Activated CD8-positive, alpha-beta memory T cell treated with anti-CD3 and anti-CD28 coated beads, Interleukin-2, amount 10 ng/mL, durations not matched to agents 7 days and 5 days (primary cell): ENCODE measurements at regions of chr1 and their contacts with region 1.

Region 1: DNA sequence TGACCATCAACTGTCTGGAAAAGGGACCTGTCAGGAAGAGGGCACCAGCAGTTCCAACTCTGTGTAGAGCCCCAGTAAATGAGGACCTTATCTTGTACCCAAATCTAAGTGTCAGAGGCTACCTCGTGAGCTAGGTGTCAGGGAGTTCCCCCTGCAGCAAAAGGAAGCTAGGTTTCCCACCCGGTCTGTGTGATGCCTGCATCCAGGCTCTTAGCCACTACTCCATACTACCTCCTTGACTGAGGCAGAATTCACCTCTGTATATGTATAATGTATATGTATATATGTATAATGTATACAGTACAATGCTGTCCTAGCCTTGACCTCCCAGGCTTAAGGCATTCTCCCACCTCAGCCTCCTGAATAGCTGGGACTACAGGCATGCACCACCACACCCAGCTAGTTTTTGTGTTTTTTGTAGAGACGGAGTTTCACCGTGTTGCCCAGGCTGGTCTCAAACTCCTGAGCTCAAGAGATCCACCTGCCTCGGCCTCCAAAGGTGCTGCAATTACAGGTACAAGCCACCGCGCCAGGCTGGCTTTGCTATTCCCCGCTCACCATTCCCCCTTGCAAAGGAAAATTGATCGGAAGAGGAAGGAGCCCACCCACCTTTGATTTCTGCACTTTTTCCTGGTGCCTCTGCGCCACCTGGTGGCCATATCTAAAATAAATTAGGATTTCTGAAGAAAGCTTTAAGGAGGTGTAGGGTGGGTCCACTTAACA is 15.7 kb upstream of the LUZP1 start:
- DNase-seq: no peak
- ATAC-seq: peak; percentile 36
- H3K4me3 Mint-ChIP-seq: peak overlapping the region; percentile 33
- H3K27ac Mint-ChIP-seq: no peak overlapping the region
- H3K4me1 Mint-ChIP-seq: peaks cover 7% of the 10 kb centered on the region
- H3K27me3 Mint-ChIP-seq: peaks cover 13% of the 10 kb centered on the region

Region 2: GRCh38 chr1:23057301-23057700 is 127.1 kb before region 1 on chr1:
- CTCF ChIA-PET with region 1: interaction called, 13 read pairs
- DNase-seq: no peak
- ATAC-seq: no peak
- H3K4me3 Mint-ChIP-seq: no peak overlapping the region
- H3K27ac Mint-ChIP-seq: no peak overlapping the region
- H3K4me1 Mint-ChIP-seq: no peaks in the 10 kb centered on the region
- H3K27me3 Mint-ChIP-seq: no peaks in the 10 kb centered on the region

Region 3: DNA sequence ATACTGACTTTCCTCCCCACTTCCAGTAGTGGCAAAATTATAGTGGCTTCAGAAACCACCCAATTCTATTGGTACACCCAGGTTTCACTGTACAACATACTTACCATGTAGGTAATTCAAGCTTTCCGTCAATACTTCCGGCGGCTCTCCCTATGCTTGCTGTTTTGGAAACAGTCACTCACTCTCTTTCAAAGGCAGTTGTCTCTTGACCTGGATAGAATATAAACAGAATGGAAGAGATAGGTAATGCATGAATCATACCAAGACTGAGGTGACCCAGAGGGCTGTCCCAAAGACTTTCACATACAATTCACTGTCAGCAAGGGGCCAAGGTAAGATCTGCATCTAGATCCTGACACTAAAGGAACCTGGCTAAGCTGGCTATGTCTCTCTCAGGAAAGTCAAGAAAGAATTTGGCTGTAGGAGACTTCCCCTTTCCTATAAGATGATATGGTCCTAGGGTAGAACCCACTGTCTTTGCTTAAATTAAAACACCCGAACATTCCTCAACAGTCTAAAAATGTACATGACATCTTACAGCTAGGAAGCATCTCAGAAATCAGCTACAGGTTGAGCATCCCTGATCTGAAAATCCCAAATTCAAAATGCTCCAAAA is 75.3 kb before region 1 on chr1:
- CTCF ChIA-PET with region 1: interaction called, 515 read pairs
- DNase-seq: no peak
- ATAC-seq: no peak
- H3K4me3 Mint-ChIP-seq: no peak overlapping the region
- H3K27ac Mint-ChIP-seq: no peak overlapping the region
- H3K4me1 Mint-ChIP-seq: peaks cover 51% of the 10 kb centered on the region
- H3K27me3 Mint-ChIP-seq: no peaks in the 10 kb centered on the region

Region 4: DNA sequence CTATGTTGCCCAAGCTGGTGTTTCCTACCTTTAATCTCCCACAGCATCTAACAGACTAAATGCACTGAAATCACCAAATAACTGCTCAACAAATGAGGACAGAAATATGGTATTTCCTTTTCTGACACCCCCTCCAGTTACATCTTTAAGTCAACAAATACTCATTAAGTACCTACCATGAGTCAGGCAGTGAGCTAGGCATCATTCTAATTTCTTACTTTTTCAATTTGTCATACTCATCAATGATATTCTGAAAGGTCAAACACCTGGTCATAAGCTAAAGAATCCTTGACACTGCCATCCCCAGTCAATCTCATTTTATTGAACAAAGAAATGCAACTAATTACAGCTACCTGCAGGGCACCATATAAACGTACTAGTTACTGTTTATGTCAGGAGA is 52.3 kb before region 1 on chr1:
- CTCF ChIA-PET with region 1: interaction called, 23 read pairs
- DNase-seq: no peak
- ATAC-seq: no peak
- H3K4me3 Mint-ChIP-seq: no peak overlapping the region
- H3K27ac Mint-ChIP-seq: no peak overlapping the region
- H3K4me1 Mint-ChIP-seq: peaks cover 3% of the 10 kb centered on the region
- H3K27me3 Mint-ChIP-seq: no peaks in the 10 kb centered on the region

Region 5: DNA sequence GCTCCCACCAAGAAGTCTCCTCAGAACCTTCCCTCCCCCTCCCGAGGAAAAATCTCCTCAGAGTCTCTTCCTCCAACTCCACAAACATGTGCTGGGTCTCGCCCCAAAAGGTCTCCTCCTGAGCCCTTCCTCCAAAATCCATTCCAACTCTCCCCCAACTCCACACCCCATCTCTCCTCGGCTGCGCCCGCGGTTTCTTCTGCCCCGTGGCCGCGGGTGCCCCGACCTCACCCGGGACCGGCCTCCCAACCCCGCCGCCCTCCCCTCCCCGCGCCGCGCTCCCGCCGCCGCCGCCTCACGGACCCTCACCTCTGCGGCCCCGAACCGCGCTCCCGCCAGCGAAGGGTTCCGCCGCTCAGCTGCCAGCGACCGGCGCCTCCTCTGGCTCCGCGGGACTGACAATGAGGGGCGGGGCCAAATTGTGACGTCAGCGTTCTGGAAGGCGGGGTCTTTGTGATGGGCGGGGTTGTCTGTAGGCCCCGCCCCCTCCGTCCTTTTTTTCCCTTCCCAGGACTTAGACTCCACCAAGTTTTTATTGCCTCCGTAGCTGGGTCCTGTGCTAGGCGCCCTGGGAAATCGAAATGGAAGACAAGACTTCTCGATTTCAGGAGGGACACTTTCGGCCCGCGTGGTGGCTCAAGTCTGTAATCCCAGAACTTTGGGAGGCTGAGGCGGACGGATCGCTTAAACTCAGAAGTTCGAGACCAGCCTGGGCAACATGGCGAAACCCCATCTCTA is 15.7 kb before region 1 on chr1 and contains the start of gene LUZP1:
- CTCF ChIA-PET with region 1: interaction called, 107 read pairs
- DNase-seq: peak; percentile 90
- ATAC-seq: peak; percentile 90
- H3K4me3 Mint-ChIP-seq: peak within 1 kb of the TSS; percentile 98
- H3K27ac Mint-ChIP-seq: peak within 1 kb of the TSS; percentile 84
- H3K4me1 Mint-ChIP-seq: peaks cover 14% of the 10 kb centered on the region
- H3K27me3 Mint-ChIP-seq: peaks cover 2% of the 10 kb centered on the region
- total RNA-seq, gene LUZP1: 19.5 to 20.4 TPM

Region 6: DNA sequence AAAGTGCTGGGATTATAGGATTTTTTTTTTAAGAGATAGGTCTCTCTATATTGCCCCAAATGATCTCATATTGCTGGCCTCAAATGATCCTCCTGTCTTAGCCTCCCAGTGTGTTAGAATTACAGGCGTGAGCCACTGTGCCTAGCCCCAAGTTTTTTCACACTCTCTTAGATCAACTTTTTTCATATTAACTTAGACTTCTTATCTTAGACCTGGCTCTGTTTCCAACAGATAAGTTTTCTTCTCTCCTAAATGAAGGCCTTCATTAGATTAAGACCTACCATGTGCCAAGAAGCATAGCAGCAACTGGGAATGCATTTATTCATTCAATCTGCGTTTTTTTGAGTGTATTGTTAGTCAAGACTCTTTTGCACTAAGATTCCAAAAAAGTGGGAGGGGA is 53.1 kb after region 1 on chr1:
- CTCF ChIA-PET with region 1: no interaction called
- DNase-seq: no peak
- ATAC-seq: no peak
- H3K4me3 Mint-ChIP-seq: no peak overlapping the region
- H3K27ac Mint-ChIP-seq: no peak overlapping the region
- H3K4me1 Mint-ChIP-seq: no peaks in the 10 kb centered on the region
- H3K27me3 Mint-ChIP-seq: peaks cover 6% of the 10 kb centered on the region

Region 7: DNA sequence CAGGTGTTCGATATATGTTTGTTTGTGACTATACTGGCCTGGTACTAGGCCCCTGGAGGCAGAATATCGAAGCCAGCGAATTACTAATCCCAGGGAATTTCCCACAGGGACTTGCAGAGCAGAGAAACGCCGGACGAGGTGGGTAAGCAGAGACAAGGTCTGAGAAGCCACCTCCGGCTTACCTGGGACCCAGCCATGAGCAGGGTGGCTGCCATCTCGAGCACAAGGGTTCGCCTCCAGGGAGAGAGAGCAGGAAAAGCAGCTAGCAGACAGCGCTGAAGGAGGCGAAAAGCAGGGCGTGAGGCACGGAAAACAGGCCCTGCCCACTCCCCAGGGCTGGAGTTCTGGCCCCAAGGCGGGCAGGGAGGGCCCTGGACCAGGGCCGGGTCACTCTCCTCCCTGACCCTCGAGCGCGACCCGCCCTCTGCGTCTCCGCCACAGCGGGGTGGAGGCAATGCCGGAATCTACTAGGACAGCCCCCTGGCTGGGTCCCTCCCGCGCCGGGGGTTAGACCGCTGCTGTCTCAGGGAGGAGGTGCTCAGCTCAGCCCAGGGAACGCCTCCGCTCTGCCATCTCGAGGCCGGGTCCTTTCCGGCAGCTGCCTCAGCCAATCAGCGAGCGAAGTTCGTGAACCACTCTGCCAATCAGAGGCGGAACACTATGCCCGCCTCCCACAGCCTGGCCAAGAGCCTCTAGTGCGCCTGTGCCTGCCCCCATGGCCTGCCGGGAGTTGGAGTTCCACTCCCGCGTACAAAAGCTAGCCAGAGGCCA is 183.6 kb after region 1 on chr1:
- CTCF ChIA-PET with region 1: no interaction called
- DNase-seq: peak; percentile 99
- ATAC-seq: peak; percentile 93
- H3K4me3 Mint-ChIP-seq: peak overlapping the region; percentile 91
- H3K27ac Mint-ChIP-seq: peak overlapping the region; percentile 98
- H3K4me1 Mint-ChIP-seq: peaks cover 30% of the 10 kb centered on the region
- H3K27me3 Mint-ChIP-seq: no peaks in the 10 kb centered on the region